Aorta (tissue), 5 donors: ENCODE measurements at regions of chr10 and their contacts with region 1.

Region 1: GRCh38 chr10:93376372-93377293 is 105.5 kb downstream of the MYOF start:
- DNase-seq: peak; percentile 67 to 75
- ATAC-seq: peak; percentile 92
- H3K4me3 ChIP-seq: peak overlapping the region in 1 of 2 donors; percentile 26
- H3K27ac ChIP-seq: peak overlapping the region; percentile 86 to 98
- H3K4me1 ChIP-seq: peaks cover 7 to 9% of the 10 kb centered on the region in 2 donors
- H3K27me3 ChIP-seq: no peaks in the 10 kb centered on the region

Region 2: DNA sequence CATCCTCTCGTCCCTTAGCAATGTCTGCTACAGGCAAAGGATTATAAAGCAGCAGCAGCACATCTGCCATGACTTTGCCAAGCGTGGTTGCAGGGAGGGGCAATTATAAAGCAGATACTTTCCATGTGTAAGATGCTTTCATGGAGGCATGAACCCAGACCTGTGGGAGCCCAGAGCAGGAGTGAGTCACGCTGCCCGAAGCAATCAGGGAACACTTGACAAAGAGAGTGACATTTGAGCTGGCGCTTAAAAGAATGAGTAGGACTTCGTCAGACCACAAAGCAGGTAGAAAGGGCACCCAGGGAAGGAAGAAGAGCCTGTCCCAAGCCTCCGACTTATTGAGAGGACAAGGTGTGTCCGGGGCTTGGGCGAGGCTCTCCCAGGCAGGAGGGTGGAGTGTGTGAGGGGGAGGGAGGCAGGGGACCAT is 41.7 kb before region 1 on chr10:
- intact Hi-C with region 1: no loop called
- DNase-seq: no peak
- ATAC-seq: no peak
- H3K4me3 ChIP-seq: no peak overlapping the region
- H3K27ac ChIP-seq: no peak overlapping the region
- H3K4me1 ChIP-seq: no peaks in the 10 kb centered on the region
- H3K27me3 ChIP-seq: no peaks in the 10 kb centered on the region

Region 3: DNA sequence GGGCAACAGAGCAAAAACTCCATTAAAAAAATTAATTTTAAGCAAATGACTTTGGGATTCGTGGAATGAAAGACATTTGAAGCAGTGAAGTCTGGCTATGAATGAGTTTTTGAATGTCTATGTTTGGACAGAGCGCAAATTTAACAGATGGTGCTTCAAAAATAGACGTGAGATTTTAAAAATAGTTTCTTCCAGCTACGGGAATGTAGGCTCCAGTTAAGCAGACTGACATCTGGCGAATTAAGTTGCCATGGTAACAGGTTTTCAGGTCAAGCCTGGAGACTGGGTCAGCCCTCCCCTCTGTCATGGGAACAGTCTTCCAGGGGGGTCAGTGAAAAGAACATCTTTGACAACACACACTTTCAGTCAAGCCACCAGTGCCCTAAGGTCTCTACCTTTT is 43.5 kb after region 1 on chr10:
- intact Hi-C with region 1: loop called in 1 of 2 experiments (anchors 5 kb)
- DNase-seq: no peak
- ATAC-seq: peak; percentile 71
- H3K4me3 ChIP-seq: no peak overlapping the region
- H3K27ac ChIP-seq: peak overlapping the region in 1 of 2 donors; percentile 78
- H3K4me1 ChIP-seq: peaks cover 2 to 3% of the 10 kb centered on the region in 2 donors
- H3K27me3 ChIP-seq: no peaks in the 10 kb centered on the region

Region 4: DNA sequence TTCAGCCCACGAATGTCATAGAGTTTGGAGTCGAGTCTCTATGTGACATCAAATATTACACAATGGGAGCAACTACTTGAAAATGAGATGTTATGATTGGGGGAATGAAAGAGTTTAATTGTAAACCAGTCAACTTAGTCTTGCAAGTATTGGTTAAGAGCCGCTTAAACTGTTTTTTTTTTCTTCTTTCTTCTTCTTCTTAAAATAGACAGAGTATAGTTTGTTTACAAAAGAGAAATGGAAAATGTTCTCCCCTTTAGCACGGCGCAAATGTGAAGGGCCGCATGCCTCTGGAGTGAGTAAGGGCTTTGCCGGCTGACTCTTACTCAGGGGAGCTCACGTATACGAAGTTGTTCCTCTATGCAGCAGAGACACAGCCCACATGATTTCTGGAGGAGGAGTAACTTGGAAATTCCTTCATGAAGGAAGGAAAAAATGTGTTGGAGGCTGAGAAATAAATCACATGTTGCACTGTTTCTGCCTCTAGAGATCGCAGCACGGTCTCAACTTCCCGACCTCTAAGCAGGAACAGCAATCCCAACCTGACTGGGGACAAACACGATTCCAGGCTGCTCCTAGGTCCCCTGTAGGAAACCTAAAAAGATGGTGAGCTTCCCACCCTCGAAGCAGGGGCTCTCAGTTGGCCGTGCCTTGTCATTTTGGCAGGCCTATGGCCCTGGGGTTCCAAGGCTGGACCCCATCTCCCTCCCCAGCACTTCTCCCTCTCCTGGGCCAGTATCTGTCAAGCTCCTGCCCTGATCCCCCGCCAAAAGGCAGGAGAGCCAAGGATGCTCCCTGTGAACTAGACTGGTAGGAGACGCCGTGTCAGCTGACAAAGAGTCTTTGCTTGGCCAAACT is 60.7 kb after region 1 on chr10:
- intact Hi-C with region 1: loop called (anchors 2 kb)
- DNase-seq: peak; percentile 92
- ATAC-seq: peak; percentile 94
- H3K4me3 ChIP-seq: no peak overlapping the region
- H3K27ac ChIP-seq: peak overlapping the region; percentile 100
- H3K4me1 ChIP-seq: peaks cover 2 to 9% of the 10 kb centered on the region in 2 donors
- H3K27me3 ChIP-seq: no peaks in the 10 kb centered on the region

Region 5: DNA sequence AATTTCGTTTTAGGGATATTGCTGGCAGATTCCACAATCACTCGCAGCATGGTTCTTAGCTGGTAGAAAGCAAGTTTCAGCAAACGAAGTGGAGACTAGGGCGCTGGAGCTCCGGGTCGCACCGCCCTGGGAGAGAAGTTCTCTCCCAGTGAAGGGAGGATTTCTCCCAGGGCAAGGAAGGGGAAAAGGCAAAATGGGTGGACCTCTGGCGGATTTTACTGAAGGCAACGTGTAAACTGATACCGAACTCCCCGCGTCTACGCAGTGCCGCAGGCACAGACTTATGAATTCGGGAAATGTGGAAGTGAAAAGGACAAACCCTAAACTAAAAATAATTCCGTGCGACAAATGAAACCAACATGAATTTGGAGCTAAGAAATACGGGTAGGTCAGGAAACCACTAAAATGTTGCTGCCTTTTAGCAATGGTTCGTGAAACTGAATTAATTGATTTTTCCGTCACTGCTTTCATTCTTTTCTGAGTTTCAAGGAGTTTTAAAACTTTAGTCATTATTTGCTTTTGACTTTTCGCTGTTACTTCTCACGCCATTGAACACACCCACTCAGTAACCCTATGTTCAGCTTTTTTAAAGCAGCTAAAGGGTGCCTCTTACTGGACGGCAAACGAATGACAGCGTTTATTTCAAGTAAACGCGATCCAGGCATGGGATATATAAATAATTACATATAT is 105.7 kb after region 1 on chr10 and contains the start of gene MYOF:
- intact Hi-C with region 1: loop called (anchors 1 kb)
- DNase-seq: peak in 1 of 2 donors; percentile 76
- ATAC-seq: peak; percentile 93
- H3K4me3 ChIP-seq: peak within 1 kb of the TSS; percentile 87 to 99
- H3K27ac ChIP-seq: peak within 1 kb of the TSS; percentile 84 to 98
- H3K4me1 ChIP-seq: peaks cover 0 to 3% of the 10 kb centered on the region in 2 donors
- H3K27me3 ChIP-seq: no peaks in the 10 kb centered on the region
- total RNA-seq, gene MYOF: 226 to 242 TPM

Region 6: GRCh38 chr10:93496322-93497041 is 119.8 kb after region 1 on chr10 and contains the start of gene CEP55:
- intact Hi-C with region 1: loop called in 1 of 2 experiments (anchors 5 kb)
- DNase-seq: peak; percentile 97 to 98
- ATAC-seq: peak; percentile 100
- H3K4me3 ChIP-seq: peak within 1 kb of the TSS; percentile 44 to 48
- H3K27ac ChIP-seq: no peak within 1 kb of the TSS
- H3K4me1 ChIP-seq: no peaks in the 10 kb centered on the region
- H3K27me3 ChIP-seq: no peaks in the 10 kb centered on the region
- total RNA-seq, gene CEP55: 0.55 to 1.4 TPM

Region 7: DNA sequence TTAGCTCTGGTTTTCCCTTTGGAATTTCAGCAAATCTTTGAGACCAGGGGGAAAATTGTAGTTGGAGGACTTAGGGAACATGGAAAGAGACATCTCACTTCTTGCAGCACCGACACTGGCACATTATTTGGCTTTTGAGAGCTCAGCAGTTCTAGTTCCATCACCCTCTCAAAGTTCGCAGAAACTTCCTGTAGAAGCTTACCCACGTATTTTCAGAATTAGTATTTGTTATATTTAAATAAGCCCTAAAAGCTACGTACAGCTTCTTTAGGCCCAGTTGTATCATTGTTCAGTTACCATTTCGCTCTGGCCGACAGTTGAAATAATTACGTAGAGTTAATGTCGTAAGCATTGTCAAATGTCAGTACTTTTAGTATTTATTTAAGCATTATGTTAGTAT is 133.2 kb after region 1 on chr10:
- intact Hi-C with region 1: loop called in 1 of 2 experiments (anchors 2 kb)
- DNase-seq: no peak
- ATAC-seq: no peak
- H3K4me3 ChIP-seq: no peak overlapping the region
- H3K27ac ChIP-seq: no peak overlapping the region
- H3K4me1 ChIP-seq: peaks cover 0 to 2% of the 10 kb centered on the region in 2 donors
- H3K27me3 ChIP-seq: no peaks in the 10 kb centered on the region